CD8-positive, alpha-beta T cell (primary cell): ENCODE measurements at regions of chr22 and their contacts with region 1.

Region 1: GRCh38 chr22:21567456-21568346 is at the start of gene UBE2L3:
- DNase-seq: peak; percentile 64 to 91 (median 83)
- ATAC-seq: peak; percentile 88
- H3K4me3 ChIP-seq: peak within 1 kb of the TSS; percentile 71 to 79
- H3K4me3 Mint-ChIP-seq: peak within 1 kb of the TSS; percentile 87
- H3K27ac ChIP-seq: peak within 1 kb of the TSS; percentile 88 to 90
- H3K27ac Mint-ChIP-seq: peak within 1 kb of the TSS; percentile 94
- H3K4me1 ChIP-seq: peaks cover 43% of the 10 kb centered on the region
- H3K4me1 Mint-ChIP-seq: peaks cover 40% of the 10 kb centered on the region
- H3K27me3 ChIP-seq: no peaks in the 10 kb centered on the region
- H3K27me3 Mint-ChIP-seq: no peaks in the 10 kb centered on the region
- CTCF ChIP-seq: no peak
- total RNA-seq, gene UBE2L3: 20.7 to 22.4 TPM

Region 2: GRCh38 chr22:21585389-21585788 is 17.7 kb after region 1 on chr22:
- CTCF ChIA-PET with region 1: no interaction called
- POLR2A ChIA-PET with region 1: no interaction called
- intact Hi-C with region 1: loop called in 1 of 2 experiments (anchors 2 kb)
- DNase-seq: no peak
- ATAC-seq: no peak
- H3K4me3 ChIP-seq: no peak overlapping the region
- H3K4me3 Mint-ChIP-seq: no peak overlapping the region
- H3K27ac ChIP-seq: no peak overlapping the region
- H3K27ac Mint-ChIP-seq: peak overlapping the region; percentile 6
- H3K4me1 ChIP-seq: peaks cover 25% of the 10 kb centered on the region
- H3K4me1 Mint-ChIP-seq: peaks cover 59% of the 10 kb centered on the region
- H3K27me3 ChIP-seq: no peaks in the 10 kb centered on the region
- H3K27me3 Mint-ChIP-seq: no peaks in the 10 kb centered on the region
- CTCF ChIP-seq: no peak

Region 3: GRCh38 chr22:21629262-21630149 is 61.8 kb after region 1 on chr22 and contains the start of gene YDJC:
- CTCF ChIA-PET with region 1: interaction called, 5 read pairs
- POLR2A ChIA-PET with region 1: interaction called, 7 read pairs
- intact Hi-C with region 1: loop called (anchors 1 kb)
- DNase-seq: peak; percentile 91 to 97 (median 95)
- ATAC-seq: peak; percentile 84
- H3K4me3 ChIP-seq: peak within 1 kb of the TSS; percentile 92 to 99
- H3K4me3 Mint-ChIP-seq: peak within 1 kb of the TSS; percentile 93
- H3K27ac ChIP-seq: peak within 1 kb of the TSS; percentile 89 to 91
- H3K27ac Mint-ChIP-seq: peak within 1 kb of the TSS; percentile 90
- H3K4me1 ChIP-seq: peaks cover 42% of the 10 kb centered on the region
- H3K4me1 Mint-ChIP-seq: peaks cover 37% of the 10 kb centered on the region
- H3K27me3 ChIP-seq: no peaks in the 10 kb centered on the region
- H3K27me3 Mint-ChIP-seq: no peaks in the 10 kb centered on the region
- CTCF ChIP-seq: peak; percentile 95
- total RNA-seq, gene YDJC: 25.6 to 26.0 TPM